Activated CD4-positive, alpha-beta memory T cell treated with anti-CD3 and anti-CD28 coated beads, Interleukin-2, amount 10 ng/mL, durations not matched to agents 7 days and 5 days (primary cell): ENCODE measurements at regions of chr11 and their contacts with region 1.

Region 1: GRCh38 chr11:18243783-18244362 is 4.6 kb downstream of the SAA2 start:
- DNase-seq: peak; percentile 76
- H3K4me3 Mint-ChIP-seq: no peak overlapping the region
- H3K27ac Mint-ChIP-seq: no peak overlapping the region
- H3K4me1 Mint-ChIP-seq: peaks cover 35% of the 10 kb centered on the region
- H3K27me3 Mint-ChIP-seq: peaks cover 17% of the 10 kb centered on the region

Region 2: GRCh38 chr11:17703951-17704350 is 539.9 kb before region 1 on chr11:
- CTCF ChIA-PET with region 1: no interaction called
- POLR2A ChIA-PET with region 1: no interaction called
- DNase-seq: no peak
- H3K4me3 Mint-ChIP-seq: no peak overlapping the region
- H3K27ac Mint-ChIP-seq: no peak overlapping the region
- H3K4me1 Mint-ChIP-seq: no peaks in the 10 kb centered on the region
- H3K27me3 Mint-ChIP-seq: peaks cover 7% of the 10 kb centered on the region

Region 3: GRCh38 chr11:18225913-18226312 is 18.0 kb before region 1 on chr11:
- CTCF ChIA-PET with region 1: interaction called, 12 read pairs
- POLR2A ChIA-PET with region 1: no interaction called
- DNase-seq: no peak
- H3K4me3 Mint-ChIP-seq: no peak overlapping the region
- H3K27ac Mint-ChIP-seq: no peak overlapping the region
- H3K4me1 Mint-ChIP-seq: no peaks in the 10 kb centered on the region
- H3K27me3 Mint-ChIP-seq: peaks cover 8% of the 10 kb centered on the region

Region 4: DNA sequence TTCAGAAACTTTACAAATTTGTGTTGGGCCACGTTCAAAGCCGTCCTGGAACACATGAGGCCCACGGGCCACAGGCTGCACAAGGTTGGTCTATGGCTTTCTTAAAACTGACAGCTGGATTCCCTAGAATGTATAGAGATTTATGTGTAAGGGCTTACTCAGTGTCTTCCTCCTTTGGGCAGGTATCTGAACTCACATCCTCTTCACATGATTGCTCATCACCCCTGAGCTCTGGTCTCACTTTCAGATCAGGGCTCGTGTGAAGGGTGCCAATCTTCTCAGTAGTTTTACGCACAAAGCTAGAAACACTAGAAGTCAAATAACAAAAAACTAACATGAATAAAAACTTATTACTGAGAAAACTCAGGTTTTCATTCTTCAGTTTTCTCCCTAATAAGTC is 51.0 kb after region 1 on chr11:
- CTCF ChIA-PET with region 1: interaction called, 13 read pairs
- POLR2A ChIA-PET with region 1: interaction called, 3 read pairs
- DNase-seq: no peak
- H3K4me3 Mint-ChIP-seq: no peak overlapping the region
- H3K27ac Mint-ChIP-seq: no peak overlapping the region
- H3K4me1 Mint-ChIP-seq: peaks cover 20% of the 10 kb centered on the region
- H3K27me3 Mint-ChIP-seq: no peaks in the 10 kb centered on the region

Region 5: GRCh38 chr11:18321980-18322711 is 78.3 kb after region 1 on chr11 and contains the starts of genes GTF2H1 and HPS5:
- CTCF ChIA-PET with region 1: interaction called, 29 read pairs
- POLR2A ChIA-PET with region 1: interaction called, 31 read pairs
- DNase-seq: peak; percentile 96
- H3K4me3 Mint-ChIP-seq: peak within 1 kb of the TSS; percentile 98
- H3K27ac Mint-ChIP-seq: peak within 1 kb of the TSS; percentile 96
- H3K4me1 Mint-ChIP-seq: peaks cover 65% of the 10 kb centered on the region
- H3K27me3 Mint-ChIP-seq: no peaks in the 10 kb centered on the region
- total RNA-seq, gene GTF2H1: 47.0 to 48.2 TPM
- total RNA-seq, gene HPS5: 20.3 to 22.6 TPM

Region 6: GRCh38 chr11:18358646-18359045 is 114.8 kb after region 1 on chr11:
- CTCF ChIA-PET with region 1: interaction called, 12 read pairs
- POLR2A ChIA-PET with region 1: no interaction called
- DNase-seq: no peak
- H3K4me3 Mint-ChIP-seq: no peak overlapping the region
- H3K27ac Mint-ChIP-seq: no peak overlapping the region
- H3K4me1 Mint-ChIP-seq: no peaks in the 10 kb centered on the region
- H3K27me3 Mint-ChIP-seq: no peaks in the 10 kb centered on the region

Region 7: GRCh38 chr11:18383388-18384156 is 139.7 kb after region 1 on chr11:
- CTCF ChIA-PET with region 1: interaction called, 11 read pairs
- POLR2A ChIA-PET with region 1: interaction called, 4 read pairs
- DNase-seq: peak; percentile 79
- H3K4me3 Mint-ChIP-seq: peak overlapping the region; percentile 58
- H3K27ac Mint-ChIP-seq: peak overlapping the region; percentile 99
- H3K4me1 Mint-ChIP-seq: peaks cover 42% of the 10 kb centered on the region
- H3K27me3 Mint-ChIP-seq: no peaks in the 10 kb centered on the region

Region 8: GRCh38 chr11:18731949-18732821 is 488.3 kb after region 1 on chr11:
- CTCF ChIA-PET with region 1: interaction called, 10 read pairs
- POLR2A ChIA-PET with region 1: no interaction called
- DNase-seq: peak; percentile 70
- H3K4me3 Mint-ChIP-seq: no peak overlapping the region
- H3K27ac Mint-ChIP-seq: no peak overlapping the region
- H3K4me1 Mint-ChIP-seq: peaks cover 5% of the 10 kb centered on the region
- H3K27me3 Mint-ChIP-seq: peaks cover 2% of the 10 kb centered on the region